Panc1 (cell line): ENCODE measurements at regions of chr1 and their contacts with region 1.

Region 1: GRCh38 chr1:12636098-12636950 is 7.6 kb upstream of the AADACL4 start:
- DNase-seq: no peak
- ATAC-seq: no peak
- H3K4me3 ChIP-seq: no peak overlapping the region
- H3K27ac ChIP-seq: peak overlapping the region; percentile 31; the same call in 1 of the 2 replicates
- H3K4me1 ChIP-seq: no peaks in the 10 kb centered on the region
- H3K27me3 ChIP-seq: no peaks in the 10 kb centered on the region
- CTCF ChIP-seq: no peak

Region 2: DNA sequence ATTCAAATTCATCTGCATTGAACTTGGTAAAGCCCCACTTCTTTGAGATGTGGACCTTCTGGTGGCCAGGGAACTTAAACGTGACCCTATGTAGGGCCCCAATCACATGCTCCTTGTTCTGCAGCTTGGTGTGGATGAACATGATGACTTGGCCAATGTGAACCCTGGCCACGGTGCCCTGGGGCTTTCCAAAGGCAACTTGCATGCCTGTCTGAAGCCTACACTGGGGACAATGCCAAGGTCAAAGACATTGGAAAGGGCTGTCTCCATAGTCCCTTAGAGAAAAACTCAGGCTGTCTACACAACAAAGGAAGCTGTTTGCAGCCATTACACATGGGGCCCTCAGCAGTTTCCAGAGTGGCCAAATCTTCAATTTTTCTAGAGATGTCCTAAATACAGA is 415.4 kb before region 1 on chr1:
- CTCF ChIA-PET with region 1: no interaction called
- POLR2A ChIA-PET with region 1: interaction called, 23 read pairs
- in situ Hi-C with region 1: no loop called
- intact Hi-C with region 1: no loop called
- DNase-seq: no peak
- ATAC-seq: no peak
- H3K4me3 ChIP-seq: no peak overlapping the region
- H3K27ac ChIP-seq: no peak overlapping the region
- H3K4me1 ChIP-seq: no peaks in the 10 kb centered on the region
- H3K27me3 ChIP-seq: no peaks in the 10 kb centered on the region
- CTCF ChIP-seq: no peak